GM13976 (cell line): ENCODE measurements at regions of chr3 and their contacts with region 1.

Region 1: DNA sequence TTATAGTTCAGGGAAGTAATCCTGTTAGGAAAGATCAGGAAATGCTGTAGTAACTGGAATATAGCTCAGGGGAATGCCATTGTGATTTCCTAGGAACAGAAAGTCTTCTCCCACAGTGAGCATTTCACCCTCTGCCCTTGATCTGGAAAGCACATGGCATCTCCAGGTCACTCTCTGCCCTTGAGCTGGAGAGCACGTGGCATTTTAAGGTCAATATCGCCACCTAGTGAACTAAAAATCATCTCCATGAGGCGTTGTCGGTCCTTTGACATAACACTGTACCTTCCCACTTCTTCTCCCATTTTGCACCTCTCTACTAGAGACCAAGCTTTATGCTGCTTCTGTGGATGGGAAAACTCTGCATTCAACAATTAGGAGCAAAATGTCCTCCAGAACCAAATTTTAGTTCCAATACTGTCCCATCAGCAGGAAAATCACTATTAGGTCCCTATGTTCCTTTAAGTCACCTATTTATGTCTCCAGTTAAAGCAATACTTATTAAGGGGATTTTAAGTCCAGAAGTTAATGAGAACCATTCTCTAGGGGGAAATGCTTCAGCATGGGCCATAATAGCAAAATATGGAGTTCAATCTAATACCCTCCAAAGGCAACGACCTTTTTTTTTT is 54.7 kb upstream of the GK5 start:
- DNase-seq: peak; percentile 75
- CTCF ChIP-seq: peak; percentile 56

Region 2: GRCh38 chr3:141933421-141934300 is 346.4 kb before region 1 on chr3:
- in situ Hi-C with region 1: no loop called
- DNase-seq: peak; percentile 13
- CTCF ChIP-seq: no peak

Region 3: GRCh38 chr3:141959921-141960554 is 320.0 kb before region 1 on chr3:
- in situ Hi-C with region 1: loop called (anchors 25 kb)
- DNase-seq: no peak
- CTCF ChIP-seq: no peak

Region 4: GRCh38 chr3:142028243-142028777 is 251.8 kb before region 1 on chr3:
- in situ Hi-C with region 1: loop called (anchors 10 kb)
- DNase-seq: peak; percentile 51
- CTCF ChIP-seq: no peak

Region 5: GRCh38 chr3:142129516-142130171 is 150.4 kb before region 1 on chr3:
- in situ Hi-C with region 1: loop called (anchors 10 kb)
- DNase-seq: no peak
- CTCF ChIP-seq: no peak